ENCODE measurements at regions of chr1 and their contacts with region 1.

Region 1: DNA sequence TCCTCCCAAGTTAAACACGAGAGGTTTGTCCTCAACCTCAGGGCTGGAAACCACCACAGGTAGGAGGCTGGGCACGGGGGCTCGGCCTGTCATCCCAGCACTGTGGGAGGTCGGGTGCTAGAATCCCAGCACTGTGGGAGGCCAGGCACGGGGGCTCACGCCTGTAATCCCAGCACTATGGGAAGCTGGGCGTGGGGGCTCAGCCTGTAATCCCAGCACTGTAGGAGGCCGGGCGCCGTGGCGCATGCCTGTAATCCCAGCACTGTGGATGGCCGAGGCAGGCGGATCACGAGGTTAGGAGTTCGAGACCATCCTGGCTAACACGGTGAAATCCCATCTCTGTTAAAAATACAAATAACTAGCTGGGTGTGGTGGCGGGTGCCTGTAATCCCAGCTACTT is 6.7 kb upstream of the CDK11A start:
- DNase-seq: no peak
- H3K4me3 ChIP-seq: no peak overlapping the region
- H3K4me3 Mint-ChIP-seq: no peak overlapping the region
- H3K27ac Mint-ChIP-seq: no peak overlapping the region
- H3K4me1 ChIP-seq: no peaks in the 10 kb centered on the region
- H3K4me1 Mint-ChIP-seq: no peaks in the 10 kb centered on the region
- H3K27me3 ChIP-seq: no peaks in the 10 kb centered on the region
- H3K27me3 Mint-ChIP-seq: no peaks in the 10 kb centered on the region
- CTCF ChIP-seq: no peak

Region 2: GRCh38 chr1:1665800-1666251 is 65.0 kb before region 1 on chr1:
- CTCF ChIA-PET with region 1: no interaction called
- POLR2A ChIA-PET with region 1: no interaction called
- intact Hi-C with region 1: loop called (anchors 5 kb)
- DNase-seq: no peak
- H3K4me3 ChIP-seq: no peak overlapping the region
- H3K4me3 Mint-ChIP-seq: no peak overlapping the region
- H3K27ac Mint-ChIP-seq: no peak overlapping the region
- H3K4me1 ChIP-seq: no peaks in the 10 kb centered on the region
- H3K4me1 Mint-ChIP-seq: no peaks in the 10 kb centered on the region
- H3K27me3 ChIP-seq: no peaks in the 10 kb centered on the region
- H3K27me3 Mint-ChIP-seq: no peaks in the 10 kb centered on the region
- CTCF ChIP-seq: peak; percentile 9 to 37